Gastrocnemius medialis (tissue), 4 donors: ENCODE measurements at regions of chr14 and their contacts with region 1.

Region 1: DNA sequence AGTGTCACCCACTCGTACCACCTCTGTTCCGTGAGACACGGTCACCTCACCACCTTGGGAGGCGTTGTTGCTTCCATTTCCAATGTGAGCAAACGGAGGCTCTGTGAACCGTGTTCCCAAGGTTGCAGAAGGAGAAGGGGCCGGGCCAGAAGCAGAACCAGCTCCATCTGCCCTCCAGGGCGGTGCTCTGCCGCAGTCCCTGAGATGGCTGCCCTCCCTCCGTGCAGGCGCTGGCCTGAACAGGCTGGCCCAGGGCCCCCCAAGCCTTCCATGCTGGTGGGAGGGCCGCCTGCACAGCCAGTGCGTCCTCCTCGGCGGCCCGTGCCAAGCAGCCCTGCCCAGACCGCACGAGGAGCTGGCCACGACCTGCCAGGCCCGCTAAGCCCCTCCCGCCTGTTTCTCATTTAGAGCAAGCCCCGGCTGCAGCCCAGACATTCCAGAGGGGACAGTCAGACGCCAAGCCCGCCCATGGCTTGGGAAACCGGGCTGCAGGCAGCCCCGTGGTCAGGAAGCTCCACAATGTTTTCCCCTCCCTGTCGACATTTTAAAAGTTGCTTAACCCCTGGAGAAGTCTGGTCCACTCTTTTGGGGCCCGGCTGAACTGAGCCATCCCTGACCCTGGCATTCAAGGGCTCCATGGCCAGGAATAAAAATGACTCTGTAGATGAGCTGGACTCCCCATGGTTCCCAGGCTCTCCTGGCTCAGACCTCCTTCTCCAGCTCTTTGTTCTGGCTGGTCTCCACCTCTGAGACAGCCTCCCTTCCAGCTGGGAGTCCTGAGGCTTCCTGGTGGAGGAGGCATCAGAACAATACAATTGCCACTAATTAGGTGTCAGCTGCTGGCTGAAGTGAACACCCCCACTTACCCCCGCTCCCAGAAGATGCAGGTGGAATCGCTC is 236.0 kb downstream of the BCL11B start:
- DNase-seq: peak; percentile 62 to 85
- ATAC-seq: peak; percentile 93 to 95
- H3K4me3 ChIP-seq: peak overlapping the region; percentile 1 to 30 (median 23)
- H3K27ac ChIP-seq: peak overlapping the region; percentile 3 to 78 (median 60)
- H3K4me1 ChIP-seq: peaks cover 3 to 9% of the 10 kb centered on the region in 2 donors
- H3K27me3 ChIP-seq: no peaks in the 10 kb centered on the region
- CTCF ChIP-seq: no peak
- POLR2A ChIP-seq: no peak

Region 2: DNA sequence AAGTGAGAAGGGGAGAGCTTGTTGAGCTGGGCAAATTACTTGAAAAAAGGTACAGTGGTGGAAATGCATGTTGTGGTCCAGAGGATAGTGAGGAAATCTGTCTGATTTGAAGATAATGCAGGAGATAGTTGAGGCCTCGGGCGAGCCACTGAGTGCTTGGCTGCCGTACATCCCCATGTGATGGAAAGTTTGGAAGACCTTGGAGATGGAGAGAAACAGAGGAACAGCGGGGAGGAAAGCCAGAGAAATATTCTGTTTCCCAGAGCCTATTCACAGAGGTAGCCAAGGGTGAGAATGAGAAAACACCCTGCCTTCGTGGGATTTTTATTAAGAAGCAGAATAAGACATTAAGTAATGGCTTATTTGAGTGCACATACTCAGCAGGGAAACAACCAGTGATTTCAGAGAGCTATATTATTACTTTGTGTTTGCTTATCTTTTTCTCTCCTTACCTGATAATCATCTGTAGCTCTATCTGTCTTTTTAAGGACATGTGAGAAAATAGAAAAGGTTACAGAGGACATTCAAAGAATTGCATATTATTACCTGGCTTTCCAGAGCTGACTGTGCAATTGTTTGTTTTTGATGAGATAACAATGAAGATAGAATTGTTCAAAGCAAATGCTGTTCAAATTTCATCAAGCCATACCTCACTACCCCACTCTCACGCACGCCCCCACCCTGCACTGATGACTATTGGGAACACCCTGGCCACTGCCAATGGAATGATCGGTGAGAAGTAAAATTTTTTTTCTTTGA is 262.0 kb before region 1 on chr14:
- in situ Hi-C with region 1: no loop called
- intact Hi-C with region 1: loop called (anchors 10 kb)
- DNase-seq: no peak
- ATAC-seq: no peak
- H3K4me3 ChIP-seq: no peak overlapping the region
- H3K27ac ChIP-seq: no peak overlapping the region
- H3K4me1 ChIP-seq: no peaks in the 10 kb centered on the region
- H3K27me3 ChIP-seq: no peaks in the 10 kb centered on the region
- CTCF ChIP-seq: no peak
- POLR2A ChIP-seq: no peak

Region 3: GRCh38 chr14:98953551-98954348 is 82.2 kb before region 1 on chr14:
- in situ Hi-C with region 1: no loop called
- intact Hi-C with region 1: loop called (anchors 1 kb)
- DNase-seq: peak; percentile 80 to 84
- ATAC-seq: peak; percentile 87 to 89
- H3K4me3 ChIP-seq: peak overlapping the region in 2 of 4 donors; percentile 17 to 34
- H3K27ac ChIP-seq: peak overlapping the region in 2 of 4 donors; percentile 49 to 56
- H3K4me1 ChIP-seq: peaks cover 3 to 5% of the 10 kb centered on the region in 2 donors
- H3K27me3 ChIP-seq: no peaks in the 10 kb centered on the region
- CTCF ChIP-seq: no peak
- POLR2A ChIP-seq: no peak